ENCODE measurements at regions of chr10 and their contacts with region 1.

Region 1: GRCh38 chr10:44995914-44996636 is 4.6 kb upstream of the ZNF22 start:
- DNase-seq: peak; percentile 66 to 81 (median 79)
- H3K4me3 ChIP-seq: no peak overlapping the region
- H3K27ac ChIP-seq: peak overlapping the region; percentile 59 to 86
- H3K4me1 ChIP-seq: peaks cover 48% of the 10 kb centered on the region
- H3K27me3 ChIP-seq: no peaks in the 10 kb centered on the region
- CTCF ChIP-seq: no peak
- EP300 ChIP-seq: no peak
- POLR2A ChIP-seq: peak; percentile 5

Region 2: DNA sequence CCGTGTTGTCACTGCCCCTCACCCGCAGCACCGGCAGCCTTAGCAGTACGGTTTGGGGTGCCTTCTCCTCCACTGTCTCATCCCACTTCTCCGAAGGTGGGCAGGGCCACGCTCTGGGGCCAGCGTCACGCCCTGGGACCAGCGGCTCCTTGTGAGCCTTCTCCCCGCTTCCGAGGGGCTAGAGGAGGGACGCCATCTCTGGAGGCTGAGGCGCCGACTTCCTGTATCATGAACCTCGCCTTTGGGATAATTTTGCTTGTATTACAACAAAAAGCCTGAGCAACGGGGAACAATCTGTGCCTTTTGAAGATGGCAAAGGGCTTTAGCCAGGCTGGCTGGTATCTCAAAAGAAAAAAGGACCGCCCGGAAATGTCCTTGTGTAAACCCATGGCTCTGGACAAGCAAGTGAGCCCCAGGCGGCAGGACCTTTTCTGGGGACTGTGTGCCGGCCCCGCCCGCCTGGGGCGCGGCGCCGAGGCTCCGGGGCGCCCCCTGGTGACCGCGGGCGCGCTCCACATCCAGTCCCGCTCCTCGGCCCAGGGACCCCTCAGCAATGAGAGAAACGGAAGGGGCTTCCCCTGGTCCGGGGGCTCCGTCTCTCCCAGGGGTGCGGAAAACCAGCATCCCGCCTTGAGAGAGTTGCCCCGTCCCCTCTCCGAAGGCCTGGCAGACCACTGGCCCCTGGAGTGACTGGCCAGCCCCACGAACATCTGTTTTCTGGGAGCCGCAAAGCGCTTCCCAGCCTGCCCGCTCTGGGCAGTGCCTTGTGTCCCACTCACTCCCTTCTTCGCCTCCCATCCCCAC is 21.2 kb before region 1 on chr10:
- intact Hi-C with region 1: loop called in 1 of 4 experiments (anchors 2 kb)
- DNase-seq: peak; percentile 73 to 86 (median 78)
- H3K4me3 ChIP-seq: peak overlapping the region; percentile 69
- H3K27ac ChIP-seq: peak overlapping the region; percentile 73 to 84
- H3K4me1 ChIP-seq: peaks cover 24% of the 10 kb centered on the region
- H3K27me3 ChIP-seq: no peaks in the 10 kb centered on the region
- CTCF ChIP-seq: peak; percentile 91 to 96 (median 95)
- EP300 ChIP-seq: no peak
- POLR2A ChIP-seq: peak; percentile 32

Measured in ovary (tissue), 10 donors.